ENCODE measurements at regions of chr22 and their contacts with region 1.

Region 1: DNA sequence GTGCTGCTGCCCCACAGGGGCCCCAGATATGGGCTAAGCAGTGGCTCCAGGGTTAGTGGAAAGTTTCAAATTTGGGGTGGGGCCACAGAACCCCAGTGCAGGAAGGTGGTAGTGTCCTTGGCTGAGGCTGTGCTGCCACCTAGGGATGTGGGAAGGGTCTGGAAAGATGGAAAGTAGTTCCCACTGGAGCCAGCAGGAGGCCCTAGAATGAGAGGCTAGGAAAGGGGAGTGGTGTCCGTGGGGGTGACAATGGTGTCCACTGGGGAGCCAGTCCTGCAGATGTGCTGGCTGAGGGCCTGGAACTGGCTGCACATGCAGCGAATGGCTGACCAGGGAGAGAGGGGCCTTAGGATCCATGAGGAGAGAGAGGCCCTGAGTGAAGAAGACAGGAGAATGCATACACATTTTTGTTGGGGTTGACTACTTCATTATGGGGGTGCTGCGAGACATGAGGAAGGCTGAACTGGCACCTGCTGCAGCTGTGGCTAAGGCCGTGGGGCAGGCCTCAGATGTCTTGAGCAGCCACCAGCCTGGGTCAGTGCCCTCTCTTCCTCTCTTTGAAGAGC is 21.1 kb downstream of the RFPL3 start:
- H3K4me3 ChIP-seq: no peak overlapping the region
- H3K27ac ChIP-seq: no peak overlapping the region
- H3K4me1 ChIP-seq: no peaks in the 10 kb centered on the region; the same call in 1 of the 2 replicates
- CTCF ChIP-seq: peak; percentile 77

Region 2: GRCh38 chr22:32185821-32186220 is 193.0 kb before region 1 on chr22:
- CTCF ChIA-PET with region 1: no interaction called
- POLR2A ChIA-PET with region 1: no interaction called
- H3K4me3 ChIP-seq: no peak overlapping the region
- H3K27ac ChIP-seq: no peak overlapping the region
- H3K4me1 ChIP-seq: no peaks in the 10 kb centered on the region
- CTCF ChIP-seq: no peak

Region 3: GRCh38 chr22:32341122-32341740 is 37.6 kb before region 1 on chr22:
- CTCF ChIA-PET with region 1: no interaction called
- POLR2A ChIA-PET with region 1: no interaction called
- H3K4me3 ChIP-seq: no peak overlapping the region
- H3K27ac ChIP-seq: no peak overlapping the region
- H3K4me1 ChIP-seq: no peaks in the 10 kb centered on the region
- CTCF ChIP-seq: no peak

Region 4: DNA sequence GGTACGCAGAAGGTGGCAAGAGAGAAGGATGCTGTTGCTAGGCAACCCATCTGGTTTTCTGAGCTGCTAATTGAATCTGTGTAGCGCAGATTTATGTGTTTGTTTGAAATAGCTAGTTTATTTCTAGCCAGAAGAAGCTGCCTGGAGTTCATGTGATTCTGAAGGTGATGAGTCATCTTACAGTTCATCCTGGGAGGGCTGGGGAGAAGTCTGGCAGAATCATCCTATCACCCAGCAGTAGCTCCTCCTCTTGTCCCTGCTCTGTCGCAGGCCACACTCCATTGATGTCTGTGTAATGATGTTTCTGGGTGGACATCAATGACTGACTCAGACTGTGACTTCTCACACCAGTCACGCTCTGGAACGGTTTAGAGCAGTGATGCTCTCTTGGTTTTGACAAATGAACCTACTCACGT is 91.0 kb after region 1 on chr22:
- CTCF ChIA-PET with region 1: interaction called, 12 read pairs
- POLR2A ChIA-PET with region 1: no interaction called
- H3K4me3 ChIP-seq: no peak overlapping the region
- H3K27ac ChIP-seq: no peak overlapping the region
- H3K4me1 ChIP-seq: no peaks in the 10 kb centered on the region
- CTCF ChIP-seq: no peak

Region 5: GRCh38 chr22:32482708-32483107 is 103.9 kb after region 1 on chr22:
- CTCF ChIA-PET with region 1: no interaction called
- POLR2A ChIA-PET with region 1: no interaction called
- H3K4me3 ChIP-seq: no peak overlapping the region
- H3K27ac ChIP-seq: no peak overlapping the region
- H3K4me1 ChIP-seq: 0 out of 2 replicates have a peak, but pooled peaks cover 7% of the 10 kb centered on the region
- CTCF ChIP-seq: no peak

Region 6: DNA sequence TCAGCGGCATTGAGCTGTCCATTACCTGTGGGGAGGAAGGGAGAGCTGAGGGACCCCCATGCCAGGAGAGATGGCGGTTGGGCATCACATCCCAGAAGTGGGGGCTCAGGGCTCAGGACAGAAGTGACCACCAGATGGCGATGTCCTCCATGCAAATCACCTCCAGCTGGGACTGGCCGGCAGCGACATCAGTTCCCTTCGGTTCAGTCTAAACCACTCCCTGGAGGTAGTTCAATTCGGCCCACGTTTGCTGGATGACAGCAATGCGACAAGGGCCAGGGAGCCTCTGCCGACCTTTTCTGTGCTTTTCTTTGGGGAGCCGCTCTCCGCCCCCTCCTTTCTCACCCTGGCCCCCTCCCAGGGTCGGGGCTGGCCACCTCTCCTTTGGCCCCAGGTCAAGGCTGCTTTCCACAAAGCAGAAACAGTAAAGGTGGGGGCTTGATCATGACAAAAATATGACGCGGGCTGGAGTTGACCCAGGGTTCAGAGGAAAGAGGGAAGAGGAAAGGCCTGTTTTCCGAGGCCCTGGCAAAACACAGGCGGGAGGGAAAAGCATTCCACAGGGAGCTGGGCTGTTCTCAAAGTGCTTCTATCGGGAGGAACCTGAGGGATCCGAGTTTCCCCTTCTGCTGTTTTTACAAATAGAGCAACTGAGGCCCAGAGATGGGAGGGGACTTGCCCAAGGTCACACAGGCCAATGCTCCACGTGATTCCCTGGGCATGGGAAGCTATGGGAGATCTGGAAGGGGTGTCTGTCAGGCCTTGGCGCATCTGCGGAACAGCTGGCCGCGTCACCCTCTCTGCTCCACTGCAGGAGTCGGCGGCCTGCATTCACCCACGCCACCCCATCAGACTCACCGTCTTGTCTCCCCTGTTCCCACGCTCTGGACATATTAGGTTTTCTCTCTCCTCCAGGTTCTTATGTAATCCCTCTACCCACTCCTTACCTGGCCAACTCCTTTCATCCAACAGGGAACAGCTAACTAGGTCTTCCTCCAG is 150.5 kb after region 1 on chr22:
- CTCF ChIA-PET with region 1: no interaction called
- POLR2A ChIA-PET with region 1: no interaction called
- H3K4me3 ChIP-seq: no peak overlapping the region
- H3K27ac ChIP-seq: no peak overlapping the region
- H3K4me1 ChIP-seq: peaks cover 5% of the 10 kb centered on the region
- CTCF ChIP-seq: peak; percentile 86

Measured in HEK293 (cell line).